ENCODE measurements at regions of chr1 and their contacts with region 1.

Region 1: GRCh38 chr1:201170533-201171062 is 16.3 kb upstream of the TMEM9 start:
- DNase-seq: peak; percentile 47 to 86 (median 69)
- H3K4me3 ChIP-seq: peak overlapping the region; percentile 57
- H3K4me3 Mint-ChIP-seq: peak overlapping the region; percentile 85 to 96 (median 87)
- H3K27ac ChIP-seq: peak overlapping the region; percentile 73
- H3K27ac Mint-ChIP-seq: peak overlapping the region; percentile 83 to 93 (median 90)
- H3K4me1 ChIP-seq: no peaks in the 10 kb centered on the region
- H3K4me1 Mint-ChIP-seq: peaks cover 11 to 19% (median 14%) of the 10 kb centered on the region in 3 donors
- H3K27me3 ChIP-seq: no peaks in the 10 kb centered on the region
- H3K27me3 Mint-ChIP-seq: peaks cover 8% of the 10 kb centered on the region in 2 donors

Region 2: DNA sequence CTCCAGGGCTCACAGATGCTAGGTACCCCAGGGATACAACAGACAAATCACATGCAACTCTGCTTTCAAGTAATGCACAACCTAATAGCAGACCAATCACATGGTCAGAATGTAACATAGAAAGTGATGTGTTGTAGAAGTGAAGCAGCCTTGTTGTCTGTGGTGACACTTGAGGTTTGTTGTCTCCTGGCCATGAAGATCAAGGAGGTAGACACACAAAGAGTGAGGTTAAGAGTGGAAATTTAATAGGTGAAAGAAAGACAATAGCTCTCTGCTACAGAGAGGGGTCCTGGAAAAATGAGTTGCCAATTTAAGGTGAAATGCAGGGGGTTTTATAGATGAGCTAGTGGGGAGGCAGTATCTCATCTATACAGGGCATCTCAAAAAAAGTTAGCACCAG is 13.8 kb before region 1 on chr1:
- CTCF ChIA-PET with region 1: interaction called, 10 read pairs
- POLR2A ChIA-PET with region 1: interaction called, 6 read pairs
- DNase-seq: no peak
- H3K4me3 ChIP-seq: no peak overlapping the region
- H3K4me3 Mint-ChIP-seq: no peak overlapping the region
- H3K27ac ChIP-seq: no peak overlapping the region
- H3K27ac Mint-ChIP-seq: no peak overlapping the region
- H3K4me1 ChIP-seq: peaks cover 22% of the 10 kb centered on the region
- H3K4me1 Mint-ChIP-seq: peaks cover 17 to 27% (median 24%) of the 10 kb centered on the region in 3 donors
- H3K27me3 ChIP-seq: no peaks in the 10 kb centered on the region
- H3K27me3 Mint-ChIP-seq: peaks cover 5 to 38% of the 10 kb centered on the region in 2 donors

Region 3: DNA sequence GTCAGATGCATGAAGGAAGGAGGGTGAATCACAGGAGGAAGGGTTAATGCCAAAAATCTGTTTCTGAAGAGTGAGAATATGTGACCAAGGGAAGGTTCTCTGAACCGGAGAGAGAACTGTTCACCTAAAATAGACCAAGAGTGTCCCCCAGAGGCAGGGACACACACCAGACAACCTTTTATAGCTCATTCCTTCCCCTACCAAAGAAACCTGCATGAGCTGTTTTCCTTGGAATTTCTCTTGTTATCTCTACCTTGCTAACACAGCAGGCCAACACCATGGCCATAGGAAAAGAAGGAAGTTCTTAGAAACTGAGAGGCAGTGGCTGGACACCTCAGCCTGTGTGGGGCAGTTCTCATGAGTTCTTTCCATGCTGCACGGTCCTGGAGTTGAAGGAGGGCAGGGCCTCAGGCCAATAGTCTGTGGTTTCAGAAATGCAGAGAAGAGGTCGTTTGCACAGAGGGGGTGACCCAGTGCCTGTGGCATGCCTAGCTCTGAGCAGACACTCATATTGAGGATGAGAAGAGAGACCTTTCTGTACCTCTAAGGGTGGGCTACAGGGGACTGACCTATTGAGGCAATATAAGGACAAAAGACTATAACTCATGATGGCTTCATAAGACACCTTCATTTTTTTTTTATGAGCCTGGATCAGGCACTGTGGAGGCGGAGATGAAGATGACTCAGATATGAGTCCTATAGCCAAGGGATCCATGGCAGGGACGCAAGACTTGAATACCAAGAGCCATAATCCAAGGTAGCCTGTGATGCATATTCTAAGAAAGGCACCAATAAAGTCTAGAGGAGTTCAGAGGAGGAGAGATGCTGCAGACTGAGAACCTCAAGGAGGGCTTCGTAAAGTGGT is 59.4 kb after region 1 on chr1:
- CTCF ChIA-PET with region 1: no interaction called
- POLR2A ChIA-PET with region 1: no interaction called
- DNase-seq: no peak
- H3K4me3 ChIP-seq: no peak overlapping the region
- H3K4me3 Mint-ChIP-seq: no peak overlapping the region
- H3K27ac ChIP-seq: no peak overlapping the region
- H3K27ac Mint-ChIP-seq: no peak overlapping the region
- H3K4me1 ChIP-seq: no peaks in the 10 kb centered on the region
- H3K4me1 Mint-ChIP-seq: no peaks in the 10 kb centered on the region
- H3K27me3 ChIP-seq: peaks cover 6% of the 10 kb centered on the region
- H3K27me3 Mint-ChIP-seq: peaks cover 15 to 36% of the 10 kb centered on the region in 2 donors